ENCODE measurements at regions of chr2 and their contacts with region 1.

Region 1: DNA sequence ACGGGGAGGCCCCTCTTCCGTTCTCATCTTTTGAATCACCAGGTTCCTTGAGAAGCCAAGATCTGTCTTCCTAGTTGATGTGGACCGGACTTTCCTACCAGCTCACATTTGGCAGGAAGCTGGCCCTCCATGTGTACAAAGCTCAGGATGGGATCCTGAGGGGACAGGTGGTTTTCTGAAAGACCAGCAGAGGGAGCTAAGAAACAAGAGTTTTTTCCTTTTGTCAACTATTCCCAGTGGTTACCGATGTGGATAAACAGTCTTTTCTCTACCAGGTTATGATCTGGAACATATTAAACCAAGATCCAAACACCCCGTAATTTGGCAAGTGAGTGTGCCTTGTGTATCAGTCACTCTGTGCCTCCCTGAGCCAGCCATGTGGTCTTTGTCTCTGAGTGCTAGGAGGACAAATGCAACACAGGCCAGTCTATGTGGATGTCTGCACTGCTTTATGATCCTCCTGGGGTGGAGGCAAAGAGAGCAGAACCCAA is 25.1 kb upstream of the ARHGAP25 start:
- DNase-seq: no peak
- ATAC-seq: peak; percentile 78
- H3K4me3 ChIP-seq: no peak overlapping the region
- H3K27ac ChIP-seq: no peak overlapping the region
- H3K4me1 ChIP-seq: peaks cover 5% of the 10 kb centered on the region; the same call in 1 of the 2 replicates
- H3K27me3 ChIP-seq: no peaks in the 10 kb centered on the region; a peak in 2 of 4 replicates
- CTCF ChIP-seq: peak; percentile 61 to 66 (median 61)
- EP300 ChIP-seq: no peak
- POLR2A ChIP-seq: no peak
- RAD21 ChIP-seq: peak; percentile 63

Region 2: DNA sequence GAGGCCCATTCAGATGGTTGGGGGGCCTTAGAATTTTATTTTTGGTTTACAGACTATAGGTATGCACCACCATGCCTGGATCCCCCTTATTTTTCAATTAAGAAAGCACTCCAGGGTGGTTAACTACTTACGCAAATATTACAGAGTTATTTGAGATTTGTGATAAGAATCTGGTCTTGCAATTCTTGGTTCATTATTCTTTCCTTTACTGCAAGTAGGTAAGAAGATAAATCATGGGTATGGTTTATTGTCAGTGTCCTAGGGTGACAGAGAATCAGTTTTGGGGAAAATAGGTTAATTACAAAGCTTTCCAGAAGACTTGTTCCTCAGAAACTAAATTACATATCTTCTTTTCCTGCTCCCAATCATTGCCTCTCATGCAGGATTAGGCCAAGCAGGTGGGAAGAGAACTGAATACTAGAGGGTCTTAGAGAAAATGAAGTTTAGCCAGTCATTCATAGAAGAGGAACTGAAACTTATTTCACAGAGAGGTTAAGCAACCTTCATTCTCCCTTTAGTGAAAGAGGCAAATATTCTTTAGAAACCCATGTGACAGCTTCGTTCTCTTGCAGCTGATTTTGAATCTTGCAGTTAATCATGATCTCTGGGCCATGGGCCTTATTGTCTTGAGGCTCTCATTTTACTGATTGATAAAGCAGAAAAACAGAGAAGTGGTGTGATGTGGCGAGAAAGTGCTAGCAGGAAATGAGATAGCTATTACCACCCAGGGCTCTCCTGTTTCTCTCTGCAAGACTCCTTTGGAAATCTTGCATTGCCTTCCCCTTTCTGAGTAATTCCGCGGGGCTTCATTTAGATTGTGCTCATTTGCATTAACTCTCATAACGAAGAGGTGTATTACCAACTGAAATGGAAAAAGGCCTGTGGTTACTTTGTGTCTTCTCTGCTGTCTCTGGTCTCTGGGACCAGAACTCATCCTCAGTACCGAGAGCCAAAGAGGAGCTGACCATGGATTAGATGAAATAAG is 19.6 kb before region 1 on chr2:
- CTCF ChIA-PET with region 1: interaction called, 33 read pairs
- POLR2A ChIA-PET with region 1: no interaction called
- RAD21 ChIA-PET with region 1: interaction called, 5 read pairs
- SMC1A ChIA-PET with region 1: interaction called, 21 read pairs
- in situ Hi-C with region 1: no loop called
- intact Hi-C with region 1: no loop called
- DNase-seq: peak; percentile 85
- ATAC-seq: peak; percentile 92
- H3K4me3 ChIP-seq: peak overlapping the region; percentile 37
- H3K27ac ChIP-seq: peak overlapping the region; percentile 74
- H3K4me1 ChIP-seq: peaks cover 31% of the 10 kb centered on the region
- H3K27me3 ChIP-seq: no peaks in the 10 kb centered on the region
- CTCF ChIP-seq: no peak
- EP300 ChIP-seq: peak; percentile 45 to 95
- POLR2A ChIP-seq: no peak
- RAD21 ChIP-seq: no peak

Region 3: DNA sequence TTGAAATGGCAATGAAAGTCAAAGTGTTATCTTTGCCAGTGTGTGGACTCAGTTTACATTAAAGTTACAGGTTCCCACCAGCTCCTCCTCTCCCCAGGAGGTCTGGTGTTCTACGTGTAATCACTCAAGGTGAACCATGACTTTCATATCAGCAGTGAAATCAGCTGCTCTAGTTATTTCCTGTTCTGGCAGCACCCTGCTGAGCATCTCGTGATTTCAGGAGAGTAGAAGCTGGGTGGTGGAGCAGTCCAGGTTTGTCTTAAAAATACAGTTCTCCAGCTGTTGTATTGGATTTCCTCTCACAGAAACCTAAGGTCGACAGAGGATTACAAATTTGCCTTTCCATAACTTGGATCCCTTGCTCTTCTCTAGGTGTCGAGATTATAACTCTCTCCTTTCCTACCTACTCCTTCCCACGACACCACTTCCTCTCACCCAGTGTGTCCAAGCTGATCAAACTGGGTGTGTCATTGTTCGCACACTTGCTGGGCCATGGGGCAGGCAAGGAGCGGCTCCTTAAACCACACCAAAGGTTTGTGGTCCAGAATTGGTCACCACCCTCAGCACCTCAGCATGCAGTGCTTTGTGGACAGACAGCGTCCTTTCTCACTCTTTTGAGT is 12.1 kb after region 1 on chr2:
- CTCF ChIA-PET with region 1: interaction called, 32 read pairs
- POLR2A ChIA-PET with region 1: no interaction called
- RAD21 ChIA-PET with region 1: interaction called, 7 read pairs
- SMC1A ChIA-PET with region 1: interaction called, 6 read pairs
- in situ Hi-C with region 1: no loop called
- intact Hi-C with region 1: no loop called
- DNase-seq: no peak
- ATAC-seq: peak; percentile 75
- H3K4me3 ChIP-seq: no peak overlapping the region
- H3K27ac ChIP-seq: peak overlapping the region; percentile 3
- H3K4me1 ChIP-seq: peaks cover 29% of the 10 kb centered on the region
- H3K27me3 ChIP-seq: no peaks in the 10 kb centered on the region
- CTCF ChIP-seq: no peak
- EP300 ChIP-seq: no peak
- POLR2A ChIP-seq: no peak
- RAD21 ChIP-seq: no peak

Region 4: GRCh38 chr2:68742626-68743415 is 33.4 kb after region 1 on chr2:
- CTCF ChIA-PET with region 1: interaction called, 11 read pairs
- POLR2A ChIA-PET with region 1: no interaction called
- RAD21 ChIA-PET with region 1: interaction called, 4 read pairs
- SMC1A ChIA-PET with region 1: interaction called, 4 read pairs
- in situ Hi-C with region 1: no loop called
- intact Hi-C with region 1: no loop called
- DNase-seq: no peak
- ATAC-seq: no peak
- H3K4me3 ChIP-seq: no peak overlapping the region
- H3K27ac ChIP-seq: no peak overlapping the region
- H3K4me1 ChIP-seq: peaks cover 36% of the 10 kb centered on the region
- H3K27me3 ChIP-seq: no peaks in the 10 kb centered on the region
- CTCF ChIP-seq: no peak
- EP300 ChIP-seq: no peak
- POLR2A ChIP-seq: no peak
- RAD21 ChIP-seq: no peak

Region 5: GRCh38 chr2:68807821-68808266 is 98.4 kb after region 1 on chr2:
- CTCF ChIA-PET with region 1: no interaction called
- POLR2A ChIA-PET with region 1: no interaction called
- RAD21 ChIA-PET with region 1: no interaction called
- SMC1A ChIA-PET with region 1: no interaction called
- in situ Hi-C with region 1: no loop called
- intact Hi-C with region 1: no loop called
- DNase-seq: no peak
- ATAC-seq: no peak
- H3K4me3 ChIP-seq: no peak overlapping the region
- H3K27ac ChIP-seq: no peak overlapping the region
- H3K4me1 ChIP-seq: no peaks in the 10 kb centered on the region
- H3K27me3 ChIP-seq: peaks cover 0 to 5% of the 10 kb centered on the region in 2 experiments; a peak in 3 of 4 replicates
- CTCF ChIP-seq: no peak
- EP300 ChIP-seq: no peak
- POLR2A ChIP-seq: no peak
- RAD21 ChIP-seq: no peak

Region 6: GRCh38 chr2:68837164-68837860 is 127.8 kb after region 1 on chr2:
- CTCF ChIA-PET with region 1: interaction called, 15 read pairs
- POLR2A ChIA-PET with region 1: no interaction called
- RAD21 ChIA-PET with region 1: interaction called, 7 read pairs
- SMC1A ChIA-PET with region 1: interaction called, 5 read pairs
- in situ Hi-C with region 1: no loop called
- intact Hi-C with region 1: loop called (anchors 1 kb)
- DNase-seq: peak; percentile 13
- ATAC-seq: peak; percentile 91
- H3K4me3 ChIP-seq: no peak overlapping the region
- H3K27ac ChIP-seq: no peak overlapping the region
- H3K4me1 ChIP-seq: peaks cover 27% of the 10 kb centered on the region
- H3K27me3 ChIP-seq: peaks cover 0 to 2% of the 10 kb centered on the region in 2 experiments; a peak in 1 of 4 replicates
- CTCF ChIP-seq: peak; percentile 67 to 85 (median 84)
- EP300 ChIP-seq: no peak
- POLR2A ChIP-seq: no peak
- RAD21 ChIP-seq: peak; percentile 55

Region 7: GRCh38 chr2:68918497-68918896 is 209.0 kb after region 1 on chr2:
- CTCF ChIA-PET with region 1: interaction called, 23 read pairs
- POLR2A ChIA-PET with region 1: no interaction called
- RAD21 ChIA-PET with region 1: no interaction called
- SMC1A ChIA-PET with region 1: no interaction called
- in situ Hi-C with region 1: loop called (anchors 5 kb)
- intact Hi-C with region 1: no loop called
- DNase-seq: no peak
- ATAC-seq: no peak
- H3K4me3 ChIP-seq: no peak overlapping the region
- H3K27ac ChIP-seq: no peak overlapping the region
- H3K4me1 ChIP-seq: no peaks in the 10 kb centered on the region
- H3K27me3 ChIP-seq: peaks cover 0 to 1% of the 10 kb centered on the region in 2 experiments; a peak in 2 of 4 replicates
- CTCF ChIP-seq: no peak
- EP300 ChIP-seq: no peak
- POLR2A ChIP-seq: no peak
- RAD21 ChIP-seq: no peak